CD4-positive, alpha-beta memory T cell (primary cell): ENCODE measurements at regions of chr12 and their contacts with region 1.

Region 1: DNA sequence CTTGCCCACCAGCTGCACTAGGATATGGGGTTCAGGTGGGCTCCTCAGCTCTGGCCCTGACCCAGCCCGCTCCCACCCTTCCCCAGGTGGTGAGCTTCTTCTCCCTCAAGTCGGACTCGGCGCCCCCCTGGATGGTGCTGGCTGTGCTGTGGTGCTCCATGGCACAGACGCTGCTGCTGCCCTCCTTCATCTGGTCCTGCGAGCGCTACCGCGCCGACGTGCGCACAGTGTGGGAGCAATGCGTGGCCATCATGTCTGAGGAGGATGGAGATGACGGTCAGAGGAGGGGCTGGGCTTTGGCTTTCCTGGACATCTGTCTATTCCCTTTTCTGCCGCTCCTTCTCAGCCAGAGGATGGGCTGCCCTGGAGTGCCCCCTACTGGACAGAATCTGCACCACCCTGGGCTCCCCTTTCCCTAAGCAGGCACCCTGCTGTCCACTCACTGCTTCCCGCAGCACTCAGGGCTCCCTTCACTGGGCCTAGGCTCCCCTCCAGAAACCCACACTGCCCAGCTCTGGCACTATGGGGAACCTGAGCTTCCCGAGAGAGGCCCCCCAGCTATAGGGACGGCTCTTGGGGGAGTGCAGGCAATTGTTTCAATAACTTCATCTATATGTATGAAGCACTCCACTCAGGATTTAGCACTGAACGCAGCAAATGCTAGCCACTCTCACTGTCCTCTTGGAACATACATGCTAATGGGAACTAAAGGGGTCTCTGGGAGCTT is 2.6 kb upstream of the P3H3 start:
- DNase-seq: peak; percentile 73 to 82 (median 78)
- H3K4me3 ChIP-seq: no peak overlapping the region
- H3K4me3 Mint-ChIP-seq: peak overlapping the region in 1 of 8 donors; percentile 57
- H3K27ac ChIP-seq: no peak overlapping the region
- H3K27ac Mint-ChIP-seq: peak overlapping the region in 4 of 7 donors; percentile 24 to 71 (median 34)
- H3K4me1 ChIP-seq: peaks cover 36% of the 10 kb centered on the region
- H3K4me1 Mint-ChIP-seq: peaks cover 17 to 60% (median 28%) of the 10 kb centered on the region in 4 donors
- H3K27me3 ChIP-seq: peaks cover 10% of the 10 kb centered on the region
- H3K27me3 Mint-ChIP-seq: peaks cover 6 to 24% of the 10 kb centered on the region in 2 donors

Region 2: DNA sequence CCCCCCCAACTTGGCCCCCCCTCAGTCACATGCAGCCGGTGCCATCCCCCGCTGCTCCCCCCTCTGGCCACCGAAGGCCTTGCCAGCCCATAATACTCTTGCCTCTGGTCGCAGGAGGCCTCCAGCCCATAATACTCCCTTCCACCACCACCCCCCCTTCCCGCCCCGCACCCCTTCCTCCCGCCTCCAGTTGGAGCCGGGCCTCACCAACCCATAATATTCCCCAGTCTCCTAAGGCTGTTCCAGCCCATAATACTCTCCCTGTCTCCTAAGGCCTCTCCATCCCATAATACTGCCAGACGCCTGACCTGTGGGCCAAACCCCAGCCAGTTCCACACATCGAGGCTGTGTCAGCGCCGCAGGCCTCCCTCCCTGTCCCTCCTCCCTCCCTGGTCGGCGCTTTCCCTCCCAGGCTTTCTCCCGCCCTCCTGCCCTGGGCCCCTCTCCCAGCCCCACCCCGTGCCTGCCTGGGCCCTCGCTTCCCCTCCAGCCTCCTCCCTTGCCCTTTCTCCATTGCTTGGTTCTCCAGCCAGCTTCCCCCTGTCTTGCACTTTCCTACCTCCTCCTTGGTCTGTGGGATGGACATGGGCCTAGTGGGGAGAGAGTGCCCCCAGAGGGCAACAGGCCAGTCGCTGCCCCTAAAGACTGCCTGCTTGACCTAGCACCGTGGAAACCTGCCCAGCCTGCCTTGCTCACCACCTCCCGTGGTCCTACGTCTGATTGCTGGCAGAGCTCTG is 211.6 kb before region 1 on chr12:
- CTCF ChIA-PET with region 1: no interaction called
- POLR2A ChIA-PET with region 1: no interaction called
- intact Hi-C with region 1: loop called (anchors 1 kb)
- DNase-seq: peak in 4 of 5 donors; percentile 42 to 60 (median 53)
- H3K4me3 ChIP-seq: no peak overlapping the region
- H3K4me3 Mint-ChIP-seq: peak overlapping the region in 1 of 8 donors; percentile 67
- H3K27ac ChIP-seq: no peak overlapping the region
- H3K27ac Mint-ChIP-seq: peak overlapping the region; percentile 26 to 93 (median 85)
- H3K4me1 ChIP-seq: peaks cover 31% of the 10 kb centered on the region
- H3K4me1 Mint-ChIP-seq: peaks cover 23 to 50% (median 34%) of the 10 kb centered on the region in 4 donors
- H3K27me3 ChIP-seq: no peaks in the 10 kb centered on the region
- H3K27me3 Mint-ChIP-seq: no peaks in the 10 kb centered on the region

Region 3: DNA sequence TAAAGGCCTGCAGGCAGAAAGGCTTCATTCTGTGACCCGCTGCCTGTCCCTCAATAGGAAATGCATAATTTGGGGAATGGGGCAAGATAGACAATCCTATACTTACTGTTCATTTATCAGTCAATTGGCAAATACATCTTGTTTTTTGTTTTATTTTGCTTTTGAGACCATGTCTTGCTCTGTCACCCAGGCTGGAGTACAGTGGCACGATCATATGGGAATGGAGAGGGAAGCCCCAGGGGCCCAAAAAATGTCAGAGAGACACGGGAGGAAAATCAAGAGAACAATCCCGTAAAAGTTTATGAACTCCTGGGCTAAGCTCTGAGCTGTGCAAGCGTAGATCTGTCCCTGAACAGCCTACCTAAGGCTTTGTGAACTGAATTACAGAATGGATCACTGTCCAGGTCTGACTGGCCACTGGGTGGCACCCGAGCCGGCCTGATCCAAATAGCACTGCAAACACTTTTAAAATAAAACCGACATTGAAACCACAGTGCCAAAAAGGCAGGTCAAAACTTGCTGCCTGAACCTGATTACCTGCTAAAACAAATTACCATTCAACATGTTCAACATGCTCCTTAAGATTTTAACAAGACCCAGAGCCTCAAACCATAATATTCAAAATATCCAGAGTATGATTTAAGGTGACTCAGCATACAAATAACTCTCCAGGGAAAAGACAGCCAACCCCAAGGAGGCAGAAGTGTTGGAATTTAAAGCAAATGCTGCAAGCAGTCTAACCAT is 89.9 kb before region 1 on chr12:
- CTCF ChIA-PET with region 1: interaction called, 5 read pairs
- POLR2A ChIA-PET with region 1: no interaction called
- intact Hi-C with region 1: loop called (anchors 1 kb)
- DNase-seq: peak in 4 of 5 donors; percentile 19 to 32 (median 26)
- H3K4me3 ChIP-seq: no peak overlapping the region
- H3K4me3 Mint-ChIP-seq: no peak overlapping the region
- H3K27ac ChIP-seq: no peak overlapping the region
- H3K27ac Mint-ChIP-seq: peak overlapping the region in 1 of 7 donors; percentile 16
- H3K4me1 ChIP-seq: no peaks in the 10 kb centered on the region
- H3K4me1 Mint-ChIP-seq: no peaks in the 10 kb centered on the region
- H3K27me3 ChIP-seq: no peaks in the 10 kb centered on the region
- H3K27me3 Mint-ChIP-seq: no peaks in the 10 kb centered on the region

Region 4: DNA sequence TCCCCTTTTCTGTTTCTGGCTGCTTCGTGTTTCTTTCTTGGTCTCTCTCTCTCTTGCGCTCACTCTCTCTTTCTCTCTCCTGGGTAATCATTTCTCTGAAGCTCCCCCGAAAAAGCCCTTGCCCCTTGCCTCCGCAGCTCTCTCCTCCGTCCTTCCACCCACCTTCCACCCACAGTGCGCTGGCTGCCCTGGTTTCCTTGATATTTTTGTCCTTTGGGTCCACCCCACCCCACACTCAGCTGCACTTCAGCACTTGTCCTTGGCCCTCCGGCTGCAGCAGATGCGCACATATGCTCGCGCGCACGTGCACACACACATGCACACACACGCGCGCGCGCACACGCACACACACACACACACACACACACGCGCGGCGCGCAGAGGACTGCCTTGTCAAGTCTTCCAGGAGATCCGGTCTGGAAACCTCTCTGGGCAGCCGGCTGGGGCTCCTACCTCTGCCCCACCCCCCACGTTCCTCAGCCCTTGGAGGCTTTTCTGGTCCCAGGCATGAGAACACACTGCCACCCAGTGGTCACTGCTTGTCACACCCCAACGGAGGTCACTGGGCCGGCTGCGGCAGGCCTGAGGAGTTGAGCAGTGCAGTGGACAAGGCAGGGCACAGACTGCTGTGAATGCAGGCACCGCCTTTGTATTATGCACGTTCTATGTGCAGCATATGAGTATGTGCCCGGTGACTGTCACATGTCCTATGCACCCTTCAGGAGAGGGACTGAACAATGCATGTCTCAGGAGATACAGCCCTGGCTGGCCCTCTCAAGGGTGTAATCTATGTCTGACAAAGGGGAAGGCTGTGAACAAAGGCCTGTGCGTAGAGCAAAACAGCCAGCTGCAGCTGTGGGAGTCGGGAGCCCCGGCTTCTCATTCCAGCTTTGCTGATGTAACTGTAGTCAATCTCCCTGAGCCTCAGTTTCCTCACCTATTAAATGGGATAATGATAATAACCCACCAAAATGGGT is 46.7 kb before region 1 on chr12:
- CTCF ChIA-PET with region 1: interaction called, 303 read pairs
- POLR2A ChIA-PET with region 1: interaction called, 5 read pairs
- intact Hi-C with region 1: loop called (anchors 1 kb)
- DNase-seq: peak; percentile 84 to 90 (median 84)
- H3K4me3 ChIP-seq: peak overlapping the region in 1 of 2 donors; percentile 58
- H3K4me3 Mint-ChIP-seq: peak overlapping the region; percentile 67 to 97 (median 86)
- H3K27ac ChIP-seq: peak overlapping the region; percentile 6
- H3K27ac Mint-ChIP-seq: peak overlapping the region; percentile 49 to 98 (median 90)
- H3K4me1 ChIP-seq: peaks cover 28% of the 10 kb centered on the region
- H3K4me1 Mint-ChIP-seq: peaks cover 22 to 66% (median 45%) of the 10 kb centered on the region in 4 donors
- H3K27me3 ChIP-seq: peaks cover 6% of the 10 kb centered on the region
- H3K27me3 Mint-ChIP-seq: peaks cover 6 to 21% of the 10 kb centered on the region in 2 donors

Region 5: GRCh38 chr12:6813363-6813762 is 12.2 kb before region 1 on chr12:
- CTCF ChIA-PET with region 1: interaction called, 11 read pairs
- POLR2A ChIA-PET with region 1: interaction called, 4 read pairs
- intact Hi-C with region 1: no loop called
- DNase-seq: no peak
- H3K4me3 ChIP-seq: no peak overlapping the region
- H3K4me3 Mint-ChIP-seq: no peak overlapping the region
- H3K27ac ChIP-seq: no peak overlapping the region
- H3K27ac Mint-ChIP-seq: no peak overlapping the region
- H3K4me1 ChIP-seq: no peaks in the 10 kb centered on the region
- H3K4me1 Mint-ChIP-seq: peaks cover 0 to 20% (median 16%) of the 10 kb centered on the region in 4 donors
- H3K27me3 ChIP-seq: no peaks in the 10 kb centered on the region
- H3K27me3 Mint-ChIP-seq: no peaks in the 10 kb centered on the region

Region 6: DNA sequence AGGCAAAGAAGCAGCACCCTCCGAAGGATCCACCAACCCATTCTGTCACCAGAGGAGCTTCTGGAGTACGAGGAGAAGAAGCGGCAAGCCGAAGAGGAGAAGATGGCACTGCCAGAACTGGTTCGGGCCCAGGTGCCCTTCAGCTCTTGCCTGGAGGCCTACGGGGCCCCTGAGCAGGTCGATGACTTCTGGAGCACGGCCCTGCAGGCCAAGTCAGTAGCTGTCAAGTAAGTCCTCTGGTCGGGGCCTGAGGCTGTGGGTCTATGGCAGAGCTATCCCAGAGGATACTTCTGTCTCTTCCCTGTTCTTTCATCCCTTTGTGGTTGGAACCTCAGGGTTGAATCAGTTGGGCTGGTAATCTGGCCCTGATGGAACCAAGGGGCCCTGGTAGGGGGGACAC is 35.8 kb after region 1 on chr12:
- CTCF ChIA-PET with region 1: no interaction called
- POLR2A ChIA-PET with region 1: no interaction called
- intact Hi-C with region 1: no loop called
- DNase-seq: no peak
- H3K4me3 ChIP-seq: no peak overlapping the region
- H3K4me3 Mint-ChIP-seq: no peak overlapping the region
- H3K27ac ChIP-seq: no peak overlapping the region
- H3K27ac Mint-ChIP-seq: no peak overlapping the region
- H3K4me1 ChIP-seq: peaks cover 1% of the 10 kb centered on the region
- H3K4me1 Mint-ChIP-seq: peaks cover under 1 to 6% (median under 1%) of the 10 kb centered on the region in 4 donors
- H3K27me3 ChIP-seq: no peaks in the 10 kb centered on the region
- H3K27me3 Mint-ChIP-seq: no peaks in the 10 kb centered on the region